Activated T-helper 1 cell treated with anti-CD3 and anti-CD28 coated beads, Interleukin-12 subunit alpha, Interleukin-12 subunit beta, Interleukin-2, Interleukin-4 antibody, amounts not matched to agents 30 ng/mL and 10 ng/mL and 1 ng/mL, durations not matched to agents 14 hours and 24 hours and 36 hours (primary cell): ENCODE measurements at regions of chr5 and their contacts with region 1.

Region 1: DNA sequence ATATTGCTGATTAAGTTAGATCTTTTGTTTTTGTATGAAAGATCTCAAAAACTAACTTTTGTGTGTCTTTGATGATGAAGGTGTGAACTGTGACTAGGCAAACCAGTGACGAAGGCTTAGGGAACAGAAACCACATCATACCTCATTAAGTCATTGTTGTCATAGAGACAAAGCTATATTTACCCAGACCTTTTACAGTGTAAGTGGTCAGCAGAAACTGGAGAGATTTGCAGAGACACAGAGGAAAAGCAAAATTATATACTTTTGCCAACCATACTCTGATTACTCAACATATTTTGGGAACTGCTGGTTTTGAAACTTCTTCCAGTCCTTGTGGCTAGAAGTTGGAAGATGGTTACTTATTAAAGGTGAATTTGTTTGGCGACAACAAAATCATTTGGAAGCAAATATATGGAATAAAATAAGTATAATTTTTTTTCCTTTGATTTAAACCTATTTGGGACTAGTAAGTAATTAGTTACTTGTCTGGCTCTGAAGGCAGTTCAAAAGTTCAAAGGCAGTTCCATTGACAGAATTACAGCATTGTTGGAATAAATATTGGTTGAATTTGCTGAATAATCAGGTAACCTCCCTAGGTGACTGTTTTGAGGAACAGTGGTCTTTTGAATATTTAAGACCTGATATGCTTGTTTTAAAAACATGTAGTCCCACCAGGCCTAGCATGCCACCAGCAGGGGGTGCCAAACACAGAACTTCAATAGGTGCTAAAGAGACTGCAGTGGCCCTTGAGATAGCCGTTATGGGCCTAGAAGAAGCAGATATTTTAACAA is 103.8 kb downstream of the RPS23 start:
- DNase-seq: peak; percentile 27
- H3K4me3 Mint-ChIP-seq: no peak overlapping the region
- H3K27ac Mint-ChIP-seq: peak overlapping the region; percentile 25
- H3K4me1 Mint-ChIP-seq: peaks cover 12% of the 10 kb centered on the region
- H3K27me3 Mint-ChIP-seq: no peaks in the 10 kb centered on the region

Region 2: DNA sequence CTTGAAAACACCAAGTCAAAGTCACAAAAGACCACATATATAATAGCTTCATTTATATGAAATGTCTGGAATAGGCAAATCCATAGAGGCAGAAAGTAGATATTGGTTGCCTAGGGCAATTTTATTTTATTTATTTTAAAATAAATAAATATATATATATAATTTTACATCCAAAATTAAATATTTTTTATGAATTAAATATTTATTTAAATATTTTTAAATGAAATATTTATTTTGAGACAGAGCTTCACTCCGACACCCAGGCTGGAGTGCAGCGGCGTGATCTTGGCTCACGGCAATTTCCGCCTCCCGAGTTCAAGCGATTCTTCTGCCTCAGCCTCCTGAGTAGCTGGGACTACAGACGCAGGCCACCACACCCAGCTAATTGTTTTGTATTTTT is 261.4 kb before region 1 on chr5:
- intact Hi-C with region 1: no loop called
- DNase-seq: no peak
- H3K4me3 Mint-ChIP-seq: no peak overlapping the region
- H3K27ac Mint-ChIP-seq: no peak overlapping the region
- H3K4me1 Mint-ChIP-seq: no peaks in the 10 kb centered on the region
- H3K27me3 Mint-ChIP-seq: no peaks in the 10 kb centered on the region

Region 3: GRCh38 chr5:82107267-82107666 is 67.1 kb before region 1 on chr5:
- intact Hi-C with region 1: loop called (anchors 5 kb)
- DNase-seq: no peak
- H3K4me3 Mint-ChIP-seq: no peak overlapping the region
- H3K27ac Mint-ChIP-seq: no peak overlapping the region
- H3K4me1 Mint-ChIP-seq: peaks cover 7% of the 10 kb centered on the region
- H3K27me3 Mint-ChIP-seq: no peaks in the 10 kb centered on the region

Region 4: GRCh38 chr5:82799361-82800080 is 625.2 kb after region 1 on chr5:
- intact Hi-C with region 1: no loop called
- DNase-seq: no peak
- H3K4me3 Mint-ChIP-seq: no peak overlapping the region
- H3K27ac Mint-ChIP-seq: no peak overlapping the region
- H3K4me1 Mint-ChIP-seq: no peaks in the 10 kb centered on the region
- H3K27me3 Mint-ChIP-seq: peaks cover 6% of the 10 kb centered on the region

Region 5: DNA sequence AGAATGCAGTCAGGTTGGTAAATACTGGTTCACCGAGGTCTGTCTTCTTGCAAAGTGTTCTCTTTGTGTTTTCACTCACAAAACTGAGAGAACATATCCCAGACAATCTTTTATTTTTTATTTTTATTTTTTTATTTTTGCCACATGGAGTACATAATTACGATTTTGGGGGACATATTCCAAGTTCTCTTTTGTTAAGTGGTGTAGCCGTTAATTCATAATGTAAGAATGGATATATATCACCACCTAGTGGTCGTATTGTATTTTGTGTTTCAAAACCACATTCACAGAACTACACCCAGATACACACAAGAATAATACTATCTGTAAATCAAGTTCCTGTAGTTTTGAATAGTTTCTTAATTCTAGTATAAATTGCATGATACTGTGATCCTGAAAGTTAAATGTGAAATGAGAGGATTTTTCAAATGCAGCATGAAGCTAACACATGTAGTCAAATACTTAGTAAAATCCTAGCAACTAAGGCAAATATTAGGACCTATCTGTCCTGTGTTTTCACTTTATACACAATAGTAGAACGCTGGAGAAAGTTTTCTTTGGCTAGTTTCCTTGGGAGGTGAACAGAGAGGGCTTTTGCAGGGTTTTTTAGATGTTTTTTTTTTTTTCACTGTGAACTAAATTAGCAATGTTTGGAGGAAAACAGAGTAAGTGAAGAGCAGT is 1389.9 kb after region 1 on chr5:
- intact Hi-C with region 1: loop called (anchors 1 kb)
- DNase-seq: no peak
- H3K4me3 Mint-ChIP-seq: no peak overlapping the region
- H3K27ac Mint-ChIP-seq: no peak overlapping the region
- H3K4me1 Mint-ChIP-seq: no peaks in the 10 kb centered on the region
- H3K27me3 Mint-ChIP-seq: peaks cover 20% of the 10 kb centered on the region